Heart left ventricle (tissue), 16 donors: ENCODE measurements at regions of chr2 and their contacts with region 1.

Region 1: DNA sequence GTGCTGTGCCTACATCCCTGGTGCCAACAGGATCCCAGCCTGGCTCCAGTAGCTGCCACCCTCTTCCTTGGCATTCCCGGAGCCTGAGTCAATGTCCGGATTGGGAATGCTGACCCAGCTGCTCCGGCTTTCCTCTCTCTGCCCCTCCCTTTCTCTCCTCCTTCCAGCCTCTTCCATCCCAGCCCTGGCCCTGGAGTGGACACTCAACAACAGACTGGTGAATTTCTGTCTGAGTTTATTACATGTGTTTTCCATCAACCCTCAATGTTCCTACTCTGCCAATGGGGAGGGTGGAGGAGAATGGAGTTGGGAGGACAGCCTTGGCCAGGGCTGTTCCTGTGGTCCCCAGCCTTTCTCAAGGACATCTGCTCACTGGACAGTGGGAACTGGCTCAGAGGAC is 917 bp upstream of the PRKAG3 start:
- DNase-seq: peak in 3 of 5 donors; percentile 26 to 76 (median 62)
- ATAC-seq: peak; percentile 80 to 81 (median 80)
- H3K4me3 ChIP-seq: no peak overlapping the region
- H3K27ac ChIP-seq: peak overlapping the region; percentile 17 to 90 (median 68)
- H3K4me1 ChIP-seq: peaks cover 0 to 32% (median 6%) of the 10 kb centered on the region in 12 donors
- H3K27me3 ChIP-seq: peaks cover 0 to 40% (median 0%) of the 10 kb centered on the region in 9 donors
- CTCF ChIP-seq: no peak
- POLR2A ChIP-seq: no peak

Region 2: GRCh38 chr2:218476676-218477075 is 355.8 kb before region 1 on chr2:
- intact Hi-C with region 1: no loop called
- DNase-seq: no peak
- ATAC-seq: no peak
- H3K4me3 ChIP-seq: no peak overlapping the region
- H3K27ac ChIP-seq: peak overlapping the region in 1 of 12 donors; percentile 26
- H3K4me1 ChIP-seq: peaks cover 0 to 11% (median 0%) of the 10 kb centered on the region in 12 donors
- H3K27me3 ChIP-seq: no peaks in the 10 kb centered on the region
- CTCF ChIP-seq: no peak
- POLR2A ChIP-seq: no peak

Region 3: GRCh38 chr2:218745559-218746469 is 86.7 kb before region 1 on chr2:
- intact Hi-C with region 1: loop called in 1 of 10 experiments (anchors 5 kb)
- DNase-seq: peak; percentile 67 to 86 (median 78)
- ATAC-seq: peak; percentile 97 to 98 (median 98)
- H3K4me3 ChIP-seq: no peak overlapping the region
- H3K27ac ChIP-seq: peak overlapping the region in 11 of 12 donors; percentile 47 to 85 (median 70)
- H3K4me1 ChIP-seq: peaks cover 0 to 52% (median 14%) of the 10 kb centered on the region in 12 donors
- H3K27me3 ChIP-seq: no peaks in the 10 kb centered on the region
- CTCF ChIP-seq: no peak
- POLR2A ChIP-seq: no peak

Region 4: GRCh38 chr2:218781691-218782527 is 50.6 kb before region 1 on chr2 and contains the start of gene CYP27A1:
- intact Hi-C with region 1: loop called in 1 of 10 experiments (anchors 10 kb)
- DNase-seq: peak; percentile 46 to 75 (median 56)
- ATAC-seq: peak; percentile 81 to 95 (median 90)
- H3K4me3 ChIP-seq: peak within 1 kb of the TSS; percentile 58 to 88 (median 76)
- H3K27ac ChIP-seq: peak within 1 kb of the TSS; percentile 65 to 91 (median 78)
- H3K4me1 ChIP-seq: peaks cover 0 to 33% (median 6%) of the 10 kb centered on the region in 12 donors
- H3K27me3 ChIP-seq: peaks cover 0 to 13% (median 0%) of the 10 kb centered on the region in 9 donors
- CTCF ChIP-seq: no peak
- POLR2A ChIP-seq: peak in 1 of 2 donors; percentile 37
- total RNA-seq, gene CYP27A1: 3.3 to 43.8 (median 7.5) TPM

Region 5: DNA sequence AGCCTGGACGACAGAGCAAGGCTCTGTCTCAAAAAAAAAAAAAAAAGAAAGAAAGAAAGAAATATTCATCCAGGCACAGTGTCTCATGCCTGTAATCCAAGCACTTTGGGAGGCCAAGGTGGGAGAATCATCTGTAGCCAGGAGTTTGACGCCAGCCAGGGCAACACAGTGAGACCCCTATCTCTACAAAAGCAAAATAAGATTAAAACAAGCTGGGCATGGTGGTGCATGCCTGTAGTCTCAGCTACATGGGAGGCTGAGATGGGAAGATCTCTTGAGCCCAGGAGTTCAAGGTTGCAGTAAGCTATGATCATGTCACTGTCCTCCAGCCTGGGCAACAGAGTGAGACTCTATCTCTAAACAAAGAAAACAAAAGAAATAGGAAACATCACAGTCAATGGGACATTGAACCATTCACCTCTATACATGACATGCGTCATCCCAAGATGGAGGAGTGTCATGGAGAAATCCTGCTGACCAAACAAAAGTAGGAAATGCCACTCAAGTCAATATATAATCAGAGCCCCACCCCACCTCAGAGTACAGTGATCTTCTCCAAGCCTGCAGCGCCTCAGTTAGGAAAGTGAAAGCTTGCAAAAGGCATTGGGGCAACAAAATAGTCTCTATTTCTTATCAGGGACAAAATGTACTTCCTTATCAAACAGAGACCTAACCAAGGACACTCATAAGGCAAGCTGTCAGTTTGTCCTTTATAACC is 142.7 kb after region 1 on chr2:
- intact Hi-C with region 1: no loop called
- DNase-seq: no peak
- ATAC-seq: no peak
- H3K4me3 ChIP-seq: no peak overlapping the region
- H3K27ac ChIP-seq: no peak overlapping the region
- H3K4me1 ChIP-seq: peaks cover 0 to 7% (median 6%) of the 10 kb centered on the region in 12 donors
- H3K27me3 ChIP-seq: peaks cover 3 to 88% (median 30%) of the 10 kb centered on the region in 9 donors
- CTCF ChIP-seq: no peak
- POLR2A ChIP-seq: no peak